GM18951 (cell line): ENCODE measurements at regions of chr9 and their contacts with region 1.

Region 1: GRCh38 chr9:114738581-114739316 is 56.8 kb upstream of the TEX48 start:
- POLR2A ChIP-seq: no peak

Region 2: GRCh38 chr9:113556877-113557593 is 1181.7 kb before region 1 on chr9:
- in situ Hi-C with region 1: no loop called
- POLR2A ChIP-seq: no peak

Region 3: DNA sequence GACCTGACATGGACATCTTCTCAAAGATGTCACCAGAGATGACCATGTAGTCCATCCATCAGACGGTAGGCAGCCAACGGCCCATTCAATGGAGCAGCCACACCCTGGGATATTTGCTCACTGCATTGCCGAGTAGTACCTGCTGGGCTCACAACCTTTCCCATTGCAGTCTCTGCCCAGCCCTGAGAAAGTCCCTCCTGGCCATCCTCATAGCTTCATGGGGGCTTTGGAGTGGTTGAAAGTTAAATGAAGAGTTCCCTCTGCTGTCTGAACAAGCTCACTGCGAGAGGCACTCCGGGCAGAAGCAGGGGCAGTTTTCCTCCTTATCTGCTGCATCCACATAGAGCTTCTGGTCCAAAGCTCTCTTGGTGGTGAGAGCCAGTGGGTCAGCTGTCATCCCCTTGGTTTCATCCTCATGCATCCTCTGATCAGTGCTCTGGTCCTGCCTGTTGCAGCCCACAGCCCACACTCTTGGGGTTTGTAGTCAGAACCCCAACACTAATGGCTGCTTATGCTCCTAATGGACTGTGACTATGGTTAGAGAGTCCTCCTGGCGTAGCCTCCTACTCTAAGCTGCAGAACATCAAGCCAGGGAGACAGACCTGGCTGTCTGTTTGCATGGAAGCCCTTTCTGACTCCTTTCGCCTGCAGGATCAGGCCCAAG is 168.3 kb after region 1 on chr9:
- in situ Hi-C with region 1: loop called (anchors 25 kb)
- POLR2A ChIP-seq: no peak